Heart right ventricle (tissue), 16 donors: ENCODE measurements at regions of chr3 and their contacts with region 1.

Region 1: GRCh38 chr3:155744626-155745324 is at the start of gene PLCH1:
- DNase-seq: peak; percentile 50 to 56
- ATAC-seq: peak; percentile 86 to 96 (median 92)
- H3K4me3 ChIP-seq: peak within 1 kb of the TSS; percentile 41 to 75 (median 67)
- H3K27ac ChIP-seq: no peak within 1 kb of the TSS
- H3K4me1 ChIP-seq: peaks cover 0 to 32% (median 15%) of the 10 kb centered on the region in 9 donors
- H3K27me3 ChIP-seq: peaks cover 0 to 72% (median 39%) of the 10 kb centered on the region in 7 donors
- CTCF ChIP-seq: no peak
- total RNA-seq, gene PLCH1: 0.19 to 2.1 (median 0.51) TPM

Region 2: GRCh38 chr3:155854141-155854940 is 109.6 kb after region 1 on chr3 and contains the start of gene SLC33A1:
- intact Hi-C with region 1: loop called in 1 of 10 experiments (anchors 10 kb)
- DNase-seq: peak; percentile 98 to 99
- ATAC-seq: peak; percentile 98 to 99 (median 99)
- H3K4me3 ChIP-seq: peak within 1 kb of the TSS; percentile 74 to 100 (median 89)
- H3K27ac ChIP-seq: peak within 1 kb of the TSS; percentile 72 to 96 (median 92)
- H3K4me1 ChIP-seq: peaks cover 16 to 49% (median 45%) of the 10 kb centered on the region in 9 donors
- H3K27me3 ChIP-seq: no peaks in the 10 kb centered on the region
- CTCF ChIP-seq: no peak
- total RNA-seq, gene SLC33A1: 18.9 to 35.3 (median 25.8) TPM

Region 3: DNA sequence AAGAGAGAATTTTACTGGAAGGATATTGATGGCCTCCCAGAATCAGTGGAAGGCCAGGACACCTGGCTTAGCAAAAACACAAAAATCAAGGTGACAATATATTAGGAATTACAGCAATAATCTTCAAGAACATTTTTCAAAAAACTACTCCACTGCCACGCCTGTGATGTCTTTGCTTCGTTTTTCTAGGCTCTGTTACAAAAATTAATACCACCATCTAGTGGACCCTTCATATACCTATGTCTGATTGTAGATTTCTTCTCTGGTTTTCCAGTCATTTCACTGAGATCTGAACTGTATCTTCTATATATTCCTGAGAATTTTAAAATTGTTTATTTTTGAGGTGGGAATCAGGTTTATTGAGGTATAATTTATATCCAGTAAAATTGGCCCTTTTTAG is 115.1 kb after region 1 on chr3:
- intact Hi-C with region 1: loop called in 2 of 10 experiments (anchors 10 kb)
- DNase-seq: no peak
- ATAC-seq: no peak
- H3K4me3 ChIP-seq: no peak overlapping the region
- H3K27ac ChIP-seq: no peak overlapping the region
- H3K4me1 ChIP-seq: peaks cover 0 to 9% (median 4%) of the 10 kb centered on the region in 9 donors
- H3K27me3 ChIP-seq: no peaks in the 10 kb centered on the region
- CTCF ChIP-seq: peak in 4 of 9 donors; percentile 25 to 46 (median 34)

Region 4: GRCh38 chr3:155870133-155870944 is 125.6 kb after region 1 on chr3 and contains the start of gene GMPS:
- intact Hi-C with region 1: loop called in 2 of 10 experiments (anchors 10 kb)
- DNase-seq: peak; percentile 92 to 97
- ATAC-seq: peak; percentile 97 to 99 (median 98)
- H3K4me3 ChIP-seq: peak within 1 kb of the TSS; percentile 87 to 99 (median 97)
- H3K27ac ChIP-seq: peak within 1 kb of the TSS; percentile 60 to 97 (median 94)
- H3K4me1 ChIP-seq: peaks cover 0 to 34% (median 25%) of the 10 kb centered on the region in 9 donors
- H3K27me3 ChIP-seq: no peaks in the 10 kb centered on the region
- CTCF ChIP-seq: peak in 8 of 9 donors; percentile 49 to 75 (median 64)
- total RNA-seq, gene GMPS: 23.5 to 34.5 (median 30.6) TPM